ENCODE measurements at regions of chr19 and their contacts with region 1.

Region 1: DNA sequence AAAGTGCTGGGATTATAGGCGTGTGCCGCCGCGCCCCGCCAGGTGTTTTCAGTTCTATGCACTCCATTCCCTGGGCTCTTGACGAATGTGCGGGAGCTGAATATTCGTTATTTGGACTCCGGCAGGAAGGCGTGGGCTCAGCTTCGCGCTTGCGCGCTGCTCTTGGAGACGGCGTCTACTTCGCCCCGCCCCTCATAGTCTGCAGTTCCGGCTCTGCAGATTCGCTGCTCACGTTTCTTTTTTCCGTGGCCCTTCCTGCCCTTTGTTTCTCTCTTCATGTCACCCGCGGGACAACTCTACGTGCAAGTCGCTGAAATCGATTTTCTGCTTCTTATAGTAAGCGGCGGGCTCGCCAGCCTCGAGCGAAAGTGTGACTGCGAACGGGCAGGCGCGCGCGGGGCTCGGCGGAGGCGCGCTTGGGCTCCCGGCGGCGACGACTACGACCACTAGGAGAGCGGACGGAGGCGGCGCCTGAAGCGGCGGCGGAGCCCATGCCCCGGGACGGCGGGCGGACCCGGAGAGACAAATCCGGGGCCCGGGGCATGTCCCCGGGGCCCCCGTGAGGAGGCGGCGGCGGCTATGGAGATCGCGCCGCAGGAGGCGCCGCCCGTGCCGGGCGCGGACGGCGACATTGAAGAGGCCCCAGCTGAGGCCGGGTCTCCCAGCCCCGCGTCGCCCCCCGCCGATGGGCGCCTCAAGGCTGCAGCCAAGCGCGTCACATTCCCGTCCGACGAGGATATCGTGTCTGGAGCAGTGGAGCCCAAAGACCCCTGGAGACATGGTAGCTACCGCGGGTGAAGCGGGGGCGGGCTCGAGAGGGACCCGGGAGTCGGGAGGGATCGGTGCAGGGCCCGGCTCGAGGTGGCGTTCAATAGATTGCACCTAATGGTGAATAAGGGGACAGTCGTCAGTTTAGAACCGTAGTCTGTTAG is at the start of gene PPP1R37:
- DNase-seq: peak; percentile 92
- ATAC-seq: peak; percentile 85
- H3K4me3 ChIP-seq: peak within 1 kb of the TSS; percentile 93 to 100 (median 93)
- H3K27ac ChIP-seq: peak within 1 kb of the TSS; percentile 98
- H3K4me1 ChIP-seq: peaks cover 48% of the 10 kb centered on the region
- H3K27me3 ChIP-seq: no peaks in the 10 kb centered on the region; a peak in 1 of 5 replicates
- CTCF ChIP-seq: peak; percentile 30; the same call in 1 of the 2 replicates
- EP300 ChIP-seq: peak in 1 of 2 experiments; percentile 68; a peak in 2 of 4 replicates
- POLR2A ChIP-seq: peak in 1 of 2 experiments; percentile 59; a peak in 2 of 4 replicates
- RAD21 ChIP-seq: peak; percentile 44; the same call in 1 of the 2 replicates
- total RNA-seq, gene PPP1R37: 9.2 and 14.3 TPM in 2 replicates

Region 2: GRCh38 chr19:44845612-44846454 is 247.2 kb before region 1 on chr19 and contains the start of gene NECTIN2:
- CTCF ChIA-PET with region 1: no interaction called
- POLR2A ChIA-PET with region 1: no interaction called
- in situ Hi-C with region 1: no loop called
- intact Hi-C with region 1: no loop called
- DNase-seq: peak; percentile 95
- ATAC-seq: peak; percentile 61
- H3K4me3 ChIP-seq: peak within 1 kb of the TSS; percentile 76 to 95 (median 84)
- H3K27ac ChIP-seq: peak within 1 kb of the TSS; percentile 95
- H3K4me1 ChIP-seq: peaks cover 48% of the 10 kb centered on the region
- H3K27me3 ChIP-seq: no peaks in the 10 kb centered on the region; a peak in 1 of 5 replicates
- CTCF ChIP-seq: peak; percentile 94
- EP300 ChIP-seq: no peak
- POLR2A ChIP-seq: peak; percentile 62 to 87
- RAD21 ChIP-seq: peak; percentile 30; the same call in 1 of the 2 replicates
- total RNA-seq, gene NECTIN2: 32.7 and 75.4 TPM in 2 replicates

Region 3: DNA sequence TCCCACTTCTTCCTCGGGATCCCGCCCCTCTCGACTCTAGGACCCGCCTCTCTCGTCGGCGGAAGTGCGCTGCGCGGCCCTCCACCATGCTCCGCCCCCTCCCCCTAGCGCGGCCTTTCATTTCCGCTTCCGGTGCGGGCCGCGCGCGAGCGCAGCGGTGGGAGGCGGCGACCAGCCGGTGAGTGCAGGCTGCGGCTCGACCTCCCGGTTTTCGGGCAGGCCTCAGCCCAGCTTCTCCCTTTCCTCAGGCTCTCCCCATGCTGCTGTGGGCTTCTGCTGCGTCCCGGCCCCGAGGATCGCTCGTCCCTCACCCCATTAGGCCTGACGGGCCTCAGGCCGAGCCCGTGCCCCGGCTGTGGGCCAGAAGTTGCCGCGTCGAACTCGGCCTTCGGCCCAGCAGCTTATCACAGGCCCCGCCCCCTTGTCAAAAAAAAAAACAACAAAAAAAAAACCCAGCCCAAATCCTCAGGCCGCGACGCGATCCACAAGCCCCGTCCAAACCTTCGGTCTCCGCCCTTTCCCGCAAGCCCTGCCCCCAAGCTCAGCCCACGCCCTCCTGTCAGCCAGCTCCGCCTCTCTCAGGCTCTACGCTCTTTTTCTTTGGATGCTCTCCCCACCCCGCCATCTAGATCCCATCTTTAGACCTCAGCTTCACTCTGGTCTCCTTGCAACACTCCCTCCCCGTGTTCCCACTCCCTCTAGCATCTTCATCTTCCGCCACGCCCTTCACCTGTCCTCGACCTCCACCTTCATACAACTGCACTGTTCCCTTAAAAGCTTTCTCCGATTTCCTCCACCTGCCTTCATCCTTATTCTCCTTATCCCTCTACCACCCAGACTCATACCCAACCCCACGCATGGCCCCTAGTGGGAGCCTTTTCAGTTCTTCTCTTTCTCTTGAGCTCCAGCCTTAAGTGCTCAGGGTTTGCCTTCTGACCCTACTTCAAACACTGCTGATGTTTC is 53.8 kb before region 1 on chr19 and contains the start of gene CLASRP:
- CTCF ChIA-PET with region 1: no interaction called
- POLR2A ChIA-PET with region 1: interaction called, 11 read pairs
- in situ Hi-C with region 1: no loop called
- intact Hi-C with region 1: no loop called
- DNase-seq: peak; percentile 71
- ATAC-seq: peak; percentile 97
- H3K4me3 ChIP-seq: peak within 1 kb of the TSS; percentile 94 to 100 (median 95)
- H3K27ac ChIP-seq: peak within 1 kb of the TSS; percentile 91
- H3K4me1 ChIP-seq: peaks cover 48% of the 10 kb centered on the region
- H3K27me3 ChIP-seq: no peaks in the 10 kb centered on the region; a peak in 1 of 5 replicates
- CTCF ChIP-seq: no peak
- EP300 ChIP-seq: no peak
- POLR2A ChIP-seq: peak; percentile 78 to 91
- RAD21 ChIP-seq: no peak
- total RNA-seq, gene CLASRP: 7.4 and 32.0 TPM in 2 replicates

Region 4: DNA sequence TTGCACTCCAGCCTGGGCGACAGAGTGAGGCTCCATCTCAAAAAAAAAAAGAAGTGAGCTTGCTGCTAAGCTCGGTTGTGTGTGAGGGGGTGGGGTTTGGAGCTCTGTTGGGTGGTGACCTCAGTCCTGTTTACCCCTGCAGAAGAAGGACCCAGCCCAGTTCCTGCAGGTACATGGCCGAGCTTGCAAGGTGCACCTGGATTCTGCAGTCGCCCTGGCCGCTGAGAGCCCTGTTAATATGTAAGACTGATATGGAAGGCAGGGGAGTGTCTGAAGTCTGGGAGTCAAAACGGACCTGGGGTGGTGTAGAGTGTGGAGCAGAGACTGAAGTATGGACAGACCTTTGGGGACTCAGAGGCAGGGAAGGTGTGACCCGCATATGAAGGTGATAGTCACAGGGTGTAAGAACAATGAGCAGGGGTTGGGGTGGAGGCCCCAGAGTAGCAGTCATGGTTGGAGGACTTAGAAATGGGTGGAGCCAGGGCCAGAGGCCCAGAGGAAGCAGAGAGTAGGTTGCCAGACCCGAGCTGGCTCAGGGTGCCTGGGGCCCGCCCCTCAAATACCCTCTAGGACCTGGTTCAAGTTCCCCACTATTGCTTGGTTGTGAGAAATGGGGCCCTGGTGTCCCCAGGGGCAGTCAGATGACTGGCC is 41.0 kb before region 1 on chr19:
- CTCF ChIA-PET with region 1: no interaction called
- POLR2A ChIA-PET with region 1: no interaction called
- in situ Hi-C with region 1: no loop called
- intact Hi-C with region 1: no loop called
- DNase-seq: no peak
- ATAC-seq: no peak
- H3K4me3 ChIP-seq: no peak overlapping the region
- H3K27ac ChIP-seq: no peak overlapping the region
- H3K4me1 ChIP-seq: peaks cover 18% of the 10 kb centered on the region
- H3K27me3 ChIP-seq: no peaks in the 10 kb centered on the region
- CTCF ChIP-seq: no peak
- EP300 ChIP-seq: no peak
- POLR2A ChIP-seq: no peak
- RAD21 ChIP-seq: no peak

Region 5: GRCh38 chr19:45066921-45067656 is 25.9 kb before region 1 on chr19:
- CTCF ChIA-PET with region 1: no interaction called
- POLR2A ChIA-PET with region 1: no interaction called
- in situ Hi-C with region 1: no loop called
- intact Hi-C with region 1: no loop called
- DNase-seq: no peak
- ATAC-seq: no peak
- H3K4me3 ChIP-seq: no peak overlapping the region
- H3K27ac ChIP-seq: no peak overlapping the region
- H3K4me1 ChIP-seq: no peaks in the 10 kb centered on the region
- H3K27me3 ChIP-seq: no peaks in the 10 kb centered on the region
- CTCF ChIP-seq: no peak
- EP300 ChIP-seq: no peak
- POLR2A ChIP-seq: no peak
- RAD21 ChIP-seq: no peak

Region 6: GRCh38 chr19:45079063-45079910 is 13.7 kb before region 1 on chr19 and contains the start of gene GEMIN7:
- CTCF ChIA-PET with region 1: no interaction called
- POLR2A ChIA-PET with region 1: interaction called, 14 read pairs
- in situ Hi-C with region 1: no loop called
- intact Hi-C with region 1: no loop called
- DNase-seq: peak; percentile 60
- ATAC-seq: peak; percentile 74
- H3K4me3 ChIP-seq: peak within 1 kb of the TSS; percentile 87 to 95 (median 93)
- H3K27ac ChIP-seq: peak within 1 kb of the TSS; percentile 77
- H3K4me1 ChIP-seq: peaks cover 51% of the 10 kb centered on the region
- H3K27me3 ChIP-seq: no peaks in the 10 kb centered on the region; a peak in 1 of 5 replicates
- CTCF ChIP-seq: peak; percentile 22; the same call in 1 of the 2 replicates
- EP300 ChIP-seq: peak in 1 of 2 experiments; percentile 55; a peak in 1 of 4 replicates
- POLR2A ChIP-seq: peak; percentile 62 to 82; a peak in 3 of 4 replicates
- RAD21 ChIP-seq: peak; percentile 81
- total RNA-seq, gene GEMIN7: 30.6 and 42.0 TPM in 2 replicates

Region 7: GRCh38 chr19:45103156-45103507 is 10.1 kb after region 1 on chr19:
- CTCF ChIA-PET with region 1: no interaction called
- POLR2A ChIA-PET with region 1: interaction called, 30 read pairs
- in situ Hi-C with region 1: no loop called
- intact Hi-C with region 1: no loop called
- DNase-seq: no peak
- ATAC-seq: peak; percentile 1; the same call in 2 of the 3 replicates
- H3K4me3 ChIP-seq: peak overlapping the region; percentile 51 to 65 (median 55); a peak in 5 of 6 replicates
- H3K27ac ChIP-seq: peak overlapping the region; percentile 75
- H3K4me1 ChIP-seq: peaks cover 77% of the 10 kb centered on the region
- H3K27me3 ChIP-seq: no peaks in the 10 kb centered on the region
- CTCF ChIP-seq: no peak
- EP300 ChIP-seq: no peak
- POLR2A ChIP-seq: no peak
- RAD21 ChIP-seq: no peak

Region 8: GRCh38 chr19:45119621-45120020 is 26.6 kb after region 1 on chr19:
- CTCF ChIA-PET with region 1: no interaction called
- POLR2A ChIA-PET with region 1: no interaction called
- in situ Hi-C with region 1: no loop called
- intact Hi-C with region 1: no loop called
- DNase-seq: no peak
- ATAC-seq: no peak
- H3K4me3 ChIP-seq: no peak overlapping the region
- H3K27ac ChIP-seq: no peak overlapping the region
- H3K4me1 ChIP-seq: peaks cover 11% of the 10 kb centered on the region; the same call in 1 of the 2 replicates
- H3K27me3 ChIP-seq: no peaks in the 10 kb centered on the region
- CTCF ChIP-seq: no peak
- EP300 ChIP-seq: no peak
- POLR2A ChIP-seq: no peak
- RAD21 ChIP-seq: no peak

Region 9: GRCh38 chr19:45178262-45179071 is 85.5 kb after region 1 on chr19 and contains the start of gene BLOC1S3:
- CTCF ChIA-PET with region 1: no interaction called
- POLR2A ChIA-PET with region 1: interaction called, 11 read pairs
- in situ Hi-C with region 1: no loop called
- intact Hi-C with region 1: no loop called
- DNase-seq: peak; percentile 100
- ATAC-seq: peak; percentile 86
- H3K4me3 ChIP-seq: peak within 1 kb of the TSS; percentile 76 to 92 (median 87)
- H3K27ac ChIP-seq: peak within 1 kb of the TSS; percentile 79
- H3K4me1 ChIP-seq: peaks cover 46% of the 10 kb centered on the region
- H3K27me3 ChIP-seq: no peaks in the 10 kb centered on the region; a peak in 1 of 5 replicates
- CTCF ChIP-seq: peak; percentile 82
- EP300 ChIP-seq: peak in 1 of 2 experiments; percentile 8; a peak in 1 of 4 replicates
- POLR2A ChIP-seq: peak; percentile 77 to 81
- RAD21 ChIP-seq: no peak
- total RNA-seq, gene BLOC1S3: 3.2 and 4.3 TPM in 2 replicates

Measured in HepG2 (cell line).